ENCODE measurements at regions of chr1 and their contacts with region 1.

Region 1: GRCh38 chr1:157862114-157863070 is 20.8 kb upstream of the CD5L start:
- DNase-seq: no peak

Region 2: GRCh38 chr1:157878059-157878458 is 15.7 kb after region 1 on chr1:
- intact Hi-C with region 1: loop called in 1 of 2 experiments (anchors 1 kb)
- DNase-seq: no peak

Region 3: GRCh38 chr1:158067662-158068061 is 205.3 kb after region 1 on chr1:
- intact Hi-C with region 1: no loop called
- DNase-seq: no peak

Region 4: DNA sequence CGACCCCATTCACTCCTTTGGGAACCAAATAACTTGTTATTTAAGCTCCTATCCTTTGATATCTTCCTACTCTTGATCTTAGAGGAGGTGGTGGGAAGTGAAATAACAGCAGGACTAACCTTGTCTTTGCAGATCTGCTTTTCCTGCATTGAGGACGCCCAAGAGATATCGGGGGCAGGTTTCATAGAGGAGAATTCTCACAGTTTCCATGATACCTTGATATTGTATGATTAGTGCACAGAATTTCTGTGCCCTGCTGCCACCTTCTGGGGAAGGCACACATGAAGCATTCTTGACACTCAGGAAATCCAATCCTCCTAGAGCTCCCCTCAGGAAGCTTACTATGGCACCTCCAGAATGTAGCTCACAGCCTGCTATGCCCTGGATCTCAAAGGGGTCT is 467.3 kb after region 1 on chr1:
- intact Hi-C with region 1: no loop called
- DNase-seq: no peak